ENCODE measurements at regions of chr9 and their contacts with region 1.

Region 1: DNA sequence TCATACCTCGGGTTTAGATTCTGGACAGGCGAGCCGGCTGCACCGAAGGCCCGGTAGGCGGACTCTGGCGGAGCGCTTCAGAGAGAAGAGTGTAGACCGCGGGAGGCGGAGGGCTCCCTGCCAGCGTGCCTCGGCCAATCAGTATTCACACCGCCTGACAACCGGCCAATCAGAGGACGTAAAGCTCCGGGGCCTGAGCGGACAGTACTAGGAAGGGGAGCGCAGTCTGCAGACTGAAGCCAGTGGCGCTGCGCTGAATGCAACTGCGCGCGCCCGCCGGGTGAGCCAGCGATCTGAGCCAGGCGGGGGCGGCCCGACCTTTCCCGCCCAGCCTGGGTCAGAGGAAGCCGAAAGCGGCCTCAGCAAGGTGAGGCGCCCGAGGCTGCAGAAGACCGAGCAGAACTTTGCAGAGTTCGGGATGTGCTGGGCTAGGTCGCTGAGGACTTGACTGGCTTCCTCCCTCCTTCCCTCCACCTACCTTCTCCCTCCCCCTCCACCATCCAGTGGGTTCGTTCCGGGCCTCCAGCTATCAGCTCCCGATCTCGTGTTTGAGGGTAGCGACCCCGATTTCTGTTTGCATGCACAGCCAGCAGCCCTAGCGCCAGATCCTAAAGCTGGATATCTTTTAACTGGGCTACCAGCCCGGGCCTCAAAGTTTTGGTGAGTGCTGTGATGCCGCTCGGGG is at the start of gene DMRT2:
- DNase-seq: peak; percentile 49
- H3K4me3 Mint-ChIP-seq: peak within 1 kb of the TSS; percentile 56
- H3K27ac Mint-ChIP-seq: peak within 1 kb of the TSS; percentile 43
- H3K4me1 Mint-ChIP-seq: peaks cover 40% of the 10 kb centered on the region
- H3K27me3 Mint-ChIP-seq: peaks cover 82% of the 10 kb centered on the region
- total RNA-seq, gene DMRT2: 1.2 and 1.4 TPM in 2 replicates

Region 2: GRCh38 chr9:841371-842209 is 208.7 kb before region 1 on chr9 and contains the start of gene DMRT1:
- intact Hi-C with region 1: loop called (anchors 2 kb)
- DNase-seq: no peak
- H3K4me3 Mint-ChIP-seq: no peak within 1 kb of the TSS
- H3K27ac Mint-ChIP-seq: no peak within 1 kb of the TSS
- H3K4me1 Mint-ChIP-seq: peaks cover 5% of the 10 kb centered on the region
- H3K27me3 Mint-ChIP-seq: peaks cover 51% of the 10 kb centered on the region
- total RNA-seq, gene DMRT1: not detected in 2 replicates

Region 3: GRCh38 chr9:967903-968641 is 82.2 kb before region 1 on chr9:
- intact Hi-C with region 1: loop called (anchors 1 kb)
- DNase-seq: no peak
- H3K4me3 Mint-ChIP-seq: no peak overlapping the region
- H3K27ac Mint-ChIP-seq: no peak overlapping the region
- H3K4me1 Mint-ChIP-seq: peaks cover 5% of the 10 kb centered on the region
- H3K27me3 Mint-ChIP-seq: peaks cover 82% of the 10 kb centered on the region

Region 4: DNA sequence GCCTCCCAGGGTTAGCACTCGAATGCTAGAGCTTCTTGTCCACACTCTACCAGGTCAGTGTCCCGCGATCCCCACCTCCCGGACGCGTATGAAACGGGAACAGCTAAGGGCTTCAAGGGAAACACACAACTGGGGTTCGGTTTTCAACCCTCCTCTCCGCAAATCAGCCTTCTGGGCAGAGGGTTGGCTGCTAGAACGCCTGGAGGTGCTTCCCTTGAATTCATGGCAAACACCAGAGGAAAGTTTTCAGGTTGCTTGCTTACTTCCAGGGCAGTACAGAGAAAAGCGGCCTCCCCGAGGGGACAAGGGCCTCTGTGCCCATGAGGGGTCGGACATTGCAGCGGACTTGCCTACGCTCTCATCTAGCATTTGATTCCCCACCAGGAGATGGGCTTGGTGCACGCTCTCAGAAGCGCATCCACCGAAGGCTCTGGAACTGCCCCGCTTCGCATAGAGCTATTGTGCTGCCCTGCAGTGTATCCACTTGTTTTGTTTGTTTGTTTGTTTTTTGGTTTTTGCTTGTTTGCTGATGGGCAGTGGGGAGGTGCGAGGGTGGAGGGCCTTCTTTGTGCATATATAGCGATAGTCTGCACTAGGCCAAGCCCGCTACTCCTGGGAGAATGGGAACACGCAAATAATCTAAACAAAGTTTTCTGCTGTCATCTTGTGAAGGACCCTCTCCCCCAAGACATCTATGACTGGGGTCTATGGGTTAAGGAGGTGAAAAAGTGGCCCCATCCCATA is 75.1 kb before region 1 on chr9:
- intact Hi-C with region 1: loop called (anchors 1 kb)
- DNase-seq: no peak
- H3K4me3 Mint-ChIP-seq: no peak overlapping the region
- H3K27ac Mint-ChIP-seq: no peak overlapping the region
- H3K4me1 Mint-ChIP-seq: no peaks in the 10 kb centered on the region
- H3K27me3 Mint-ChIP-seq: peaks cover 77% of the 10 kb centered on the region

Region 5: DNA sequence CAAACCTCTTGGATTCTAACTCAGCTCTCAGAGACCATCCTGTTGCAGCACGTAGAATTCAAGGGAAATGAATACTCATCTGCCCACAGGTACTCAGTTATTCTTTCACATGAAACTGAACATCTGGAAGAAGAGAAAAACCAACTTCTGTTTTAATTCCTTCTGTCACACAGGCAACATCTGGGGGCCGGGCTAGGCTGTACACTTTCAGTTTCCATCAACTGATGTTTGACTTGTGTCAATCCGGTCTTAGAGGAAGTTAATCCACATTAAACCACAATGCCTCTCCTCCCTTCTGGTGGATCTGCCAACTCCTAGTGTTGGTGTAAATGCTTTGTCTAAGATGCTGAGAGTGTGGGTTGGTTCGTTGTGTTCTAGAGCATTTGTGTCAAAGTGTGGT is 56.3 kb before region 1 on chr9:
- intact Hi-C with region 1: no loop called
- DNase-seq: no peak
- H3K4me3 Mint-ChIP-seq: no peak overlapping the region
- H3K27ac Mint-ChIP-seq: no peak overlapping the region
- H3K4me1 Mint-ChIP-seq: peaks cover 10% of the 10 kb centered on the region
- H3K27me3 Mint-ChIP-seq: peaks cover 14% of the 10 kb centered on the region

Region 6: GRCh38 chr9:1034283-1034682 is 16.0 kb before region 1 on chr9:
- intact Hi-C with region 1: no loop called
- DNase-seq: no peak
- H3K4me3 Mint-ChIP-seq: no peak overlapping the region
- H3K27ac Mint-ChIP-seq: no peak overlapping the region
- H3K4me1 Mint-ChIP-seq: no peaks in the 10 kb centered on the region
- H3K27me3 Mint-ChIP-seq: peaks cover 15% of the 10 kb centered on the region

Region 7: GRCh38 chr9:1173206-1173605 is 122.9 kb after region 1 on chr9:
- intact Hi-C with region 1: no loop called
- DNase-seq: no peak
- H3K4me3 Mint-ChIP-seq: no peak overlapping the region
- H3K27ac Mint-ChIP-seq: no peak overlapping the region
- H3K4me1 Mint-ChIP-seq: no peaks in the 10 kb centered on the region
- H3K27me3 Mint-ChIP-seq: no peaks in the 10 kb centered on the region

Region 8: GRCh38 chr9:1604942-1605560 is 554.8 kb after region 1 on chr9:
- intact Hi-C with region 1: loop called (anchors 10 kb)
- DNase-seq: no peak
- H3K4me3 Mint-ChIP-seq: no peak overlapping the region
- H3K27ac Mint-ChIP-seq: no peak overlapping the region
- H3K4me1 Mint-ChIP-seq: no peaks in the 10 kb centered on the region
- H3K27me3 Mint-ChIP-seq: no peaks in the 10 kb centered on the region

Measured in activated T-helper 2 cell treated with anti-CD3 and anti-CD28 coated beads, Interferon-gamma antibody, Interleukin-2, Interleukin-4, amounts not matched to agents 10 μg/mL and 5 μg/mL and 100 μg/mL, durations not matched to agents 14 hours and 24 hours and 36 hours (primary cell).